ENCODE measurements at regions of chr14 and their contacts with region 1.

Region 1: DNA sequence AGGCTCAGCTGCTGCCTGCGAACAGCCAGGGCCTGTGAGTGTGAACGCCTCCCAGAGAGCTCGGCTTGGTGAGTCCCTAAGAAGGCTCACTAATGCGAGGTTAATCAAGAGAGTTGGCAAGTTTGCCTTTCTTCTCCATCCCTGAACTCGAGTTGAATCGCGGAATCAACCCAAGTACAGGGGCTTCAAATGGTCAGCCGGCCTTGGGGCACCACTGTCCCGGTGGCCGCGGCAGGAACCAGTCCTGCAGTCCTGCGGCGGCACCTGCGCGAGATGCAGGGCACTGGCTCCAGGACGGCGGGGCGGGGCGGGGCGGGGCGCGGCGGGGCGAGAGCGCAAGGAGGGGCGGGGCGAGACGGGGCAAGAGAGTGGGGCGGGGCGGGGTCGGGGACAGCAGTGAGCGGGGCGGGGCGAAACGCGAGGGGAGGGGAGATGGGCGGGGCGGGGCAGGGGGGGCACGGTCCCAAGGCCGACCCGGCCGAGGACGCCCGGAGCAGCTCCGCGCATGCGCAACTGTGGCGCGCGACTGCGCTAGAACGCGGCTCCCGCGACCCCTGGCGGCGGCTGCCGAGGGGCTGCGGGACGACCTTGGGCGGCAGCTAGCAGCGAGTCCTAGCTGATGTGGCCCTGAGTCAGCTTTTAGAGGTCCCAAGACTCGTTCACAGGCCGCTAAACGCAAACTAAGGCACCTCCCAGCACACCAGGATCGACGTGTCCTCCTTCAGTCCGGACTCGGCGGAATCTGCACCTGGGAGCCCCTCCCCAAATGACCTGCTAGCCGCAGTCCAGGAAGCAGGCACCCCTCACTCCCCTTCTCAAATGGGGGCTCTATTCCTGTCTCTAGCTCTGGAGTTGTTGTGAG is 58.0 kb downstream of the TTC7B start:
- DNase-seq: peak; percentile 89 to 98 (median 95)
- ATAC-seq: peak; percentile 89
- H3K4me3 ChIP-seq: peak overlapping the region; percentile 58 to 74
- H3K4me3 Mint-ChIP-seq: peak overlapping the region; percentile 80
- H3K27ac ChIP-seq: peak overlapping the region; percentile 54 to 72
- H3K27ac Mint-ChIP-seq: peak overlapping the region; percentile 85
- H3K4me1 ChIP-seq: peaks cover 16% of the 10 kb centered on the region
- H3K4me1 Mint-ChIP-seq: peaks cover 18% of the 10 kb centered on the region
- H3K27me3 ChIP-seq: no peaks in the 10 kb centered on the region
- H3K27me3 Mint-ChIP-seq: peaks cover 3% of the 10 kb centered on the region
- CTCF ChIP-seq: peak; percentile 68

Region 2: DNA sequence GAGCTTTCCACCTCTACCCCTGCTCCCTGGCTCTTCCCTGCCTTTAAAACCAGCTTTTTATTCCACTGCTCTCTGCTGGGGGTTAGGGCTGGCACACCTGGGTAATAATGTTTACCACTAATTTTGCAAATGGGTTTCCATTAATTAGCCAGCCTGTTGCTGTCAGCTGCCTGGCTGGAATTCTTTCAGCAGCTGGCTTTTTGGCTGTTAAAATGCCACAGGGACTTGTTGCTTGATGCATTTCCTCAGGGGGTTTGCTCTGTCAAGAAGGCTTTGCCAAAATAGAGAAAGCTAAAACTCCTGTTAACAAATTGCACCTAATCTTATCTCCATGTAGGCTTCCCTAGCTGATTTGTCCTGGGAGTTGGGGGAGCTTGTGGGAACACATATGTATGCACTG is 553.7 kb before region 1 on chr14:
- CTCF ChIA-PET with region 1: no interaction called
- POLR2A ChIA-PET with region 1: no interaction called
- intact Hi-C with region 1: no loop called
- DNase-seq: no peak
- ATAC-seq: no peak
- H3K4me3 ChIP-seq: no peak overlapping the region
- H3K4me3 Mint-ChIP-seq: no peak overlapping the region
- H3K27ac ChIP-seq: no peak overlapping the region
- H3K27ac Mint-ChIP-seq: no peak overlapping the region
- H3K4me1 ChIP-seq: no peaks in the 10 kb centered on the region
- H3K4me1 Mint-ChIP-seq: no peaks in the 10 kb centered on the region
- H3K27me3 ChIP-seq: no peaks in the 10 kb centered on the region
- H3K27me3 Mint-ChIP-seq: peaks cover 12% of the 10 kb centered on the region
- CTCF ChIP-seq: no peak

Region 3: GRCh38 chr14:90368946-90369721 is 389.1 kb before region 1 on chr14:
- CTCF ChIA-PET with region 1: interaction called, 14 read pairs
- POLR2A ChIA-PET with region 1: no interaction called
- intact Hi-C with region 1: loop called (anchors 1 kb)
- DNase-seq: peak in 2 of 9 experiments; percentile 57 to 71
- ATAC-seq: peak; percentile 98
- H3K4me3 ChIP-seq: no peak overlapping the region
- H3K4me3 Mint-ChIP-seq: no peak overlapping the region
- H3K27ac ChIP-seq: no peak overlapping the region
- H3K27ac Mint-ChIP-seq: no peak overlapping the region
- H3K4me1 ChIP-seq: no peaks in the 10 kb centered on the region
- H3K4me1 Mint-ChIP-seq: no peaks in the 10 kb centered on the region
- H3K27me3 ChIP-seq: peaks cover 0 to 3% of the 10 kb centered on the region in 2 experiments
- H3K27me3 Mint-ChIP-seq: no peaks in the 10 kb centered on the region
- CTCF ChIP-seq: peak; percentile 80

Region 4: GRCh38 chr14:90697577-90698206 is 60.6 kb before region 1 on chr14:
- CTCF ChIA-PET with region 1: interaction called, 3 read pairs
- POLR2A ChIA-PET with region 1: no interaction called
- intact Hi-C with region 1: loop called in 1 of 2 experiments (anchors 1 kb)
- DNase-seq: peak; percentile 55 to 85 (median 73)
- ATAC-seq: peak; percentile 90
- H3K4me3 ChIP-seq: no peak overlapping the region
- H3K4me3 Mint-ChIP-seq: no peak overlapping the region
- H3K27ac ChIP-seq: no peak overlapping the region
- H3K27ac Mint-ChIP-seq: no peak overlapping the region
- H3K4me1 ChIP-seq: no peaks in the 10 kb centered on the region
- H3K4me1 Mint-ChIP-seq: no peaks in the 10 kb centered on the region
- H3K27me3 ChIP-seq: no peaks in the 10 kb centered on the region
- H3K27me3 Mint-ChIP-seq: no peaks in the 10 kb centered on the region
- CTCF ChIP-seq: peak; percentile 88

Region 5: GRCh38 chr14:90827916-90828610 is 69.8 kb after region 1 on chr14:
- CTCF ChIA-PET with region 1: no interaction called
- POLR2A ChIA-PET with region 1: no interaction called
- intact Hi-C with region 1: loop called (anchors 1 to 2 kb)
- DNase-seq: peak; percentile 80 to 93 (median 89)
- ATAC-seq: peak; percentile 99
- H3K4me3 ChIP-seq: peak overlapping the region; percentile 60 to 66
- H3K4me3 Mint-ChIP-seq: peak overlapping the region; percentile 79
- H3K27ac ChIP-seq: peak overlapping the region; percentile 34 to 90
- H3K27ac Mint-ChIP-seq: peak overlapping the region; percentile 77
- H3K4me1 ChIP-seq: peaks cover 15% of the 10 kb centered on the region
- H3K4me1 Mint-ChIP-seq: peaks cover 14% of the 10 kb centered on the region
- H3K27me3 ChIP-seq: no peaks in the 10 kb centered on the region
- H3K27me3 Mint-ChIP-seq: no peaks in the 10 kb centered on the region
- CTCF ChIP-seq: no peak

Region 6: GRCh38 chr14:92106143-92106926 is 1348.1 kb after region 1 on chr14 and contains the start of gene ATXN3:
- CTCF ChIA-PET with region 1: no interaction called
- POLR2A ChIA-PET with region 1: no interaction called
- intact Hi-C with region 1: loop called in 1 of 2 experiments (anchors 5 kb)
- DNase-seq: peak; percentile 88 to 99 (median 95)
- ATAC-seq: peak; percentile 87
- H3K4me3 ChIP-seq: peak within 1 kb of the TSS; percentile 88 to 96
- H3K4me3 Mint-ChIP-seq: peak within 1 kb of the TSS; percentile 95
- H3K27ac ChIP-seq: peak within 1 kb of the TSS; percentile 77 to 95
- H3K27ac Mint-ChIP-seq: peak within 1 kb of the TSS; percentile 93
- H3K4me1 ChIP-seq: peaks cover 45% of the 10 kb centered on the region
- H3K4me1 Mint-ChIP-seq: peaks cover 58% of the 10 kb centered on the region
- H3K27me3 ChIP-seq: no peaks in the 10 kb centered on the region
- H3K27me3 Mint-ChIP-seq: no peaks in the 10 kb centered on the region
- CTCF ChIP-seq: peak; percentile 68
- total RNA-seq, gene ATXN3: 26.5 to 27.2 TPM